ENCODE measurements at regions of chr16 and their contacts with region 1.

Region 1: DNA sequence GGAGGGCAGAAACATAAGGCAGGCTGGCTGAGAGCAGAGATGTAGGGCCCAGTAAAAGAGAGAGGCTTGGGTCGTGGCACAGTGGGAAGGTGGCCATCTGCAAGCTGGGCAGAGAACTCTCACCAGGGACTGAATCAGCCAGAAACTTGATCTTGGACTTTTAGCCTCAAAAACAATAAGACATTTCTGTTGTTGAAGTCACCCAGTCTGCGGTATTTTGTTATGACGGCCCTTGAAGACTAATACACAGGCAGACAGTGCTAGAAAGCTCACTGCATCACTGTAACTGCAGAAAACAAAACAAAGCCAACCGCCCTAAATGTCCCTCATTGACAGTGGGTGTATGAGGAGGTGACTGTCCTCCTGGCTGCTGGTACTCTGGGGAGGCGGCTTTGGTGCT is 3.9 kb upstream of the JPH3 start:
- DNase-seq: no peak

Region 2: GRCh38 chr16:86449446-86450095 is 1148.9 kb before region 1 on chr16:
- intact Hi-C with region 1: loop called in 1 of 2 experiments (anchors 5 kb)
- DNase-seq: no peak

Region 3: DNA sequence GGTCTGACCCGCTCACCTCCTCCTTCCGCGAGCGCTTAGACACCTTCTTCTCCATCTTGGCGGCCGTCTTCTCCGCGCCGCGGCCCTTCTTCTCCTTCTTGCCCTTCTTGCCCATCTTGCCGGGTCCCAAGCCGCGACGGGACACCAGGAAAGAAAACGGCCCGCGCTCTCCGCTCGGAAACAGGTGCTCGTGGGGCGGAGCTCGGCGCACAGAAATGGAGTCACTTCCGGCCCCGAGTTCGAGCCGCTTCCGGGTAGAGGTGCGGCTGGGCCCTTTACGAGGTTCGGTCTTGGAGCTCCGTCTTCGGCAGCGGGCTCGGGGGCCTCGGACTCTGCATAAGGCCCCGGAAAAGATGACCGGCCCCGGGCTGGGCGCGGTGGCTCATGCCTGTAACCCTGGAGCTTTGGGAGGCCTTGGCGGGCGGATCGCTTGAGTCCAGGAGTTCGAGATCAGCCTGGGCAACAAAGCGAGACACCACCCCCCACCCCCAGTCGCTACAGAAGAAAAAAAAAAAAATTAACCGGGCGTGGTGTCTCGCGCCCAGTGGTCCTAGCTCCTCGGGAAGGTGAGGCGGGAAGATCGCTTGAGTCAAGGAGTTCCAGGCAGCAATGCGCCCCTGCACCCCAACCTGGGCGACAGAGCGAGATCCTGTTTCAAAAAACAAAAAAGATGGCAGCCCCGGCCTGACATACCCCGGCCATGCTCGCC is 167.5 kb after region 1 on chr16 and contains the start of gene KLHDC4:
- intact Hi-C with region 1: loop called in 1 of 2 experiments (anchors 10 kb)
- DNase-seq: peak; percentile 97
- total RNA-seq, gene KLHDC4: 19.8 to 21.9 TPM

Measured in posterior vena cava (tissue), 2 donors.